Activated T-helper 1 cell treated with anti-CD3 and anti-CD28 coated beads, Interleukin-12 subunit alpha, Interleukin-12 subunit beta, Interleukin-2, Interleukin-4 antibody, amounts not matched to agents 30 ng/mL and 10 ng/mL and 1 ng/mL, durations not matched to agents 14 hours and 24 hours and 36 hours (primary cell): ENCODE measurements at regions of chr4 and their contacts with region 1.

Region 1: DNA sequence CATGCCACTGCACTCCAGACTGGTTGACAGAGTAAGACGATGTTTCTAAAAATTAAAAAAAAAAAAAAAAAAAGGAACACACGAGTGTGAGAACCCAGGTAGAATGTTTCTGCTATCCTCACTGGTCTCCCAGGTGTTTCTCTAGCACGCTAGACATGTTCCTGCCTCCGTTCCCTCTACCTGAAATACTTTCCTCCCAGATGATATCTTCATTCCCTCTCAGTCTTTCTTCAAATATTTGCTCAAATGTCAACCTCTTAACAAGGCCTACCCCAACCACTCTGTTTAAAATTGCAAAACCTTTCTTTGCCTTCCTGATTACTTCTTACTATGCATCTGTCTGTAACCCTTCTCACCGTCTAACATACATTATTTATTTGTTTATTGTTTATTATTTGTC is 59.5 kb upstream of the ABCG2 start:
- DNase-seq: no peak
- H3K4me3 Mint-ChIP-seq: no peak overlapping the region
- H3K27ac Mint-ChIP-seq: no peak overlapping the region
- H3K4me1 Mint-ChIP-seq: peaks cover 5% of the 10 kb centered on the region
- H3K27me3 Mint-ChIP-seq: peaks cover 5% of the 10 kb centered on the region

Region 2: DNA sequence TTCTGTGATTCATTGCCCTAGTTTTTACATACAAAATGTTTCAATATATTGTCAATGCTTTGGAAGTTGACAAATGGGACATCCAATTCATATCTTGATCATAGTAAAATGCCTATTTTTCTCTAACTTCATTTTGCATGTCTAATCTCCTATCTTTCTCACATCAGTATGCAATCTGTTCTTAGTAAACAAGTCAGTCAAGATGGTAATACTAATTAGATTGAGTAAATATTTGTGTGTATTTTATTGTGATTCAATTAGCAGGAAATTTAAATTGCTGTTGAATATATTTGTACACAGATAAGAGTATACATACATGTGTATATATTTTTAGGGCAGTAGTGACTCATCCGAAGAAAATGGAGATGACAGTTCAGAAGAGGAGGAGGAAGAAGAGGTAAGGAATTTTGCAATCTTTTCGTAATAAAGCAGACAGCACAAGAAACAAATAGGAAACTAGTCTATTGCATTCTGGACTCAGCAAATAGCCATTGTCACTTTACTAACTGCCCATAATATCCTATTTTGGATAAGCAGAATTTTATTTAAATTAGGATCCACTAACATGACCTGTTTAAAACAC is 412.0 kb before region 1 on chr4:
- intact Hi-C with region 1: no loop called
- DNase-seq: no peak
- H3K4me3 Mint-ChIP-seq: no peak overlapping the region
- H3K27ac Mint-ChIP-seq: no peak overlapping the region
- H3K4me1 Mint-ChIP-seq: no peaks in the 10 kb centered on the region
- H3K27me3 Mint-ChIP-seq: no peaks in the 10 kb centered on the region

Region 3: DNA sequence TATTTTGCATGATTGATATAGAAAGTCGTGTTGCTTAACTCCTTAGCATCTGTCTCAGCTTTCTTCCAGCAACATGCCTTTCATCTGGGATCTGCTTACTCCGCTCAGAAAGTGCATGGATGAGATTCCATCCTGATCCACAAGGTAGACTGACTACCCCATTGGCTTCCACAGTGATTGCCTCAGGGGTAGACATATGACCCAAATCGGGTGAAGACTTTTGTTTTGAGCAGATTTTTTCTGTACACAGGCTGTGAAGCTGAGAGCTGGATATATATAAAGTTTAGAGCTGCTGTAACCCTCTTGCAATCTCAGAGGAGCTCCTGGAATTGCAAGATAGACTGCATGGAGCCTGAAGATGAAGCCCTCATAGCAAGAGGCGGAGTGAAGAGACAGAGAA is 152.0 kb after region 1 on chr4:
- intact Hi-C with region 1: loop called (anchors 2 kb)
- DNase-seq: no peak
- H3K4me3 Mint-ChIP-seq: no peak overlapping the region
- H3K27ac Mint-ChIP-seq: no peak overlapping the region
- H3K4me1 Mint-ChIP-seq: peaks cover 11% of the 10 kb centered on the region
- H3K27me3 Mint-ChIP-seq: no peaks in the 10 kb centered on the region